HepG2 (cell line): ENCODE measurements at regions of chr11 and their contacts with region 1.

Region 1: DNA sequence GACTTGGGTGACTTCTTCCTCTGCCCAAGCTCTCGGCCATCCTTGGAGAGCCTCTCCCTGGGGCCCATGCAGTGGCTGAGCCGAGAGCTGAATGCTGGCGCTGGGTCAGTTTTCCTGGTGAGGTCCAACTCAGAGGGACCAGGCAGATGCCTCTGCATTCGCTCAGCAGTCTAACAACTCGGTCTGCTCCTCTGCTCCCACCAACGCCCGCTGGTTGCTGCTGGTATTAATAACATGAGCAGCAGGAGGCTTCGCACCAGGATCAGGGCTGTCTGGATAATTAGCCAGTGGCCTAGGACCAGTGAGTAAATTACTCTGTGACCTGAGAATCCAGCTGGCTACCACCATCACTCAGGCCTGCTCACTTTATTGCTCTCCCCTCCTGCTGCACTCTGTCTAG is 77.7 kb upstream of the FAM181B start:
- DNase-seq: no peak
- ATAC-seq: peak; percentile 87
- H3K4me3 ChIP-seq: peak overlapping the region in 1 of 3 experiments; percentile 7; a peak in 2 of 6 replicates
- H3K27ac ChIP-seq: no peak overlapping the region
- H3K4me1 ChIP-seq: peaks cover 26% of the 10 kb centered on the region
- H3K27me3 ChIP-seq: no peaks in the 10 kb centered on the region; a peak in 1 of 5 replicates
- CTCF ChIP-seq: no peak
- EP300 ChIP-seq: no peak
- POLR2A ChIP-seq: no peak
- RAD21 ChIP-seq: no peak

Region 2: GRCh38 chr11:82775736-82776346 is 35.5 kb before region 1 on chr11:
- CTCF ChIA-PET with region 1: no interaction called
- POLR2A ChIA-PET with region 1: no interaction called
- in situ Hi-C with region 1: no loop called
- intact Hi-C with region 1: loop called (anchors 5 kb)
- DNase-seq: peak; percentile 42
- ATAC-seq: peak; percentile 100
- H3K4me3 ChIP-seq: no peak overlapping the region
- H3K27ac ChIP-seq: no peak overlapping the region
- H3K4me1 ChIP-seq: peaks cover 9% of the 10 kb centered on the region
- H3K27me3 ChIP-seq: no peaks in the 10 kb centered on the region
- CTCF ChIP-seq: peak; percentile 82
- EP300 ChIP-seq: no peak
- POLR2A ChIP-seq: no peak
- RAD21 ChIP-seq: peak; percentile 69

Region 3: GRCh38 chr11:82900277-82901164 is 89.2 kb after region 1 on chr11 and contains the start of gene PRCP:
- CTCF ChIA-PET with region 1: no interaction called
- POLR2A ChIA-PET with region 1: no interaction called
- in situ Hi-C with region 1: no loop called
- intact Hi-C with region 1: no loop called
- DNase-seq: peak; percentile 81
- ATAC-seq: peak; percentile 95
- H3K4me3 ChIP-seq: peak within 1 kb of the TSS; percentile 87 to 96 (median 94)
- H3K27ac ChIP-seq: peak within 1 kb of the TSS; percentile 82
- H3K4me1 ChIP-seq: peaks cover 34% of the 10 kb centered on the region
- H3K27me3 ChIP-seq: no peaks in the 10 kb centered on the region; a peak in 1 of 5 replicates
- CTCF ChIP-seq: peak; percentile 42; the same call in 1 of the 2 replicates
- EP300 ChIP-seq: no peak
- POLR2A ChIP-seq: peak; percentile 82 to 90
- RAD21 ChIP-seq: peak; percentile 44; the same call in 1 of the 2 replicates
- total RNA-seq, gene PRCP: 49.9 and 84.2 TPM in 2 replicates